IMR-90 (cell line): ENCODE measurements at regions of chr2 and their contacts with region 1.

Region 1: GRCh38 chr2:208240619-208241209 is 14.2 kb downstream of the IDH1 start:
- DNase-seq: no peak
- ATAC-seq: no peak
- H3K4me3 ChIP-seq: no peak overlapping the region
- H3K27ac ChIP-seq: no peak overlapping the region
- H3K4me1 ChIP-seq: no peaks in the 10 kb centered on the region
- H3K27me3 ChIP-seq: no peaks in the 10 kb centered on the region
- CTCF ChIP-seq: no peak
- POLR2A ChIP-seq: no peak
- RAD21 ChIP-seq: no peak

Region 2: GRCh38 chr2:209348433-209348832 is 1107.7 kb after region 1 on chr2:
- CTCF ChIA-PET with region 1: no interaction called
- POLR2A ChIA-PET with region 1: no interaction called
- dilution Hi-C with region 1: no loop called
- in situ Hi-C with region 1: no loop called
- intact Hi-C with region 1: loop called (anchors 5 kb)
- DNase-seq: no peak
- ATAC-seq: no peak
- H3K4me3 ChIP-seq: no peak overlapping the region
- H3K27ac ChIP-seq: no peak overlapping the region
- H3K4me1 ChIP-seq: no peaks in the 10 kb centered on the region
- H3K27me3 ChIP-seq: no peaks in the 10 kb centered on the region
- CTCF ChIP-seq: no peak
- POLR2A ChIP-seq: no peak
- RAD21 ChIP-seq: no peak